ENCODE measurements at regions of chr2 and their contacts with region 1.

Region 1: DNA sequence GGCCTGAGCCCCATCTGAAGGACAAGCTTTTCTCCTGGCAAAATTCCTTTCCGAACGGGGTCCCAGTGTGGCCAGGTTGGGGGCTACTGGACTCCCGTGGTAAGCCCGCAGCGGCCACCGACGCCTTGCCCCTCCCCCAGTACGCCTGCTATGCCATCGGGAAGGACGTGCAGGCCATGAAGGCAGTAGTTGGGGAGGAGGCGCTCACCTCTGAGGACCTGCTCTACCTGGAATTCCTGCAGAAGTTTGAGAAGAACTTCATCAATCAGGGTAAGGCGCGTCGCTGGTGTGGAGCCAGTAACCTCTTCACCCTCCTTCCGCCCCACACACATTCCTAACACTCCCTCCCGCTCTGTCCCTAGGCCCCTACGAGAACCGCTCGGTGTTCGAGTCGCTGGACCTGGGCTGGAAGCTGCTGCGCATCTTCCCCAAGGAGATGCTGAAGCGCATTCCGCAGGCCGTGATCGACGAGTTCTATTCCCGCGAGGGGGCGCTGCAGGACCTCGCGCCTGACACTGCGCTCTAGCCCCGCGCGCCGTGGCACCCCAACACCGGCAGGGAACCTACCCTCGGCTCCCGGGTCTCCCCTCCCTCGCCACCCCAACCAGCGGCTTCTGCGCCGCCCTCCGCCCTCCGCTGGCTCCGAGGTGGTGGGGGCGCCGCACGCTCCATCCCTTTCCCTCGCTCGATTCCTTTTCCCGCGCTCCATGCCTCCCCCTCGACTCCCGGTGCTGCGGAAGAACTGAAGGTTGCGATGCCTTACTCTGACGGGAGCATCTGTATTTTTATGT is 13.6 kb upstream of the ANKRD53 start:
- DNase-seq: peak; percentile 83
- H3K4me3 Mint-ChIP-seq: peak overlapping the region; percentile 83
- H3K27ac Mint-ChIP-seq: no peak overlapping the region
- H3K4me1 Mint-ChIP-seq: peaks cover 7% of the 10 kb centered on the region
- H3K27me3 Mint-ChIP-seq: peaks cover 40% of the 10 kb centered on the region

Region 2: DNA sequence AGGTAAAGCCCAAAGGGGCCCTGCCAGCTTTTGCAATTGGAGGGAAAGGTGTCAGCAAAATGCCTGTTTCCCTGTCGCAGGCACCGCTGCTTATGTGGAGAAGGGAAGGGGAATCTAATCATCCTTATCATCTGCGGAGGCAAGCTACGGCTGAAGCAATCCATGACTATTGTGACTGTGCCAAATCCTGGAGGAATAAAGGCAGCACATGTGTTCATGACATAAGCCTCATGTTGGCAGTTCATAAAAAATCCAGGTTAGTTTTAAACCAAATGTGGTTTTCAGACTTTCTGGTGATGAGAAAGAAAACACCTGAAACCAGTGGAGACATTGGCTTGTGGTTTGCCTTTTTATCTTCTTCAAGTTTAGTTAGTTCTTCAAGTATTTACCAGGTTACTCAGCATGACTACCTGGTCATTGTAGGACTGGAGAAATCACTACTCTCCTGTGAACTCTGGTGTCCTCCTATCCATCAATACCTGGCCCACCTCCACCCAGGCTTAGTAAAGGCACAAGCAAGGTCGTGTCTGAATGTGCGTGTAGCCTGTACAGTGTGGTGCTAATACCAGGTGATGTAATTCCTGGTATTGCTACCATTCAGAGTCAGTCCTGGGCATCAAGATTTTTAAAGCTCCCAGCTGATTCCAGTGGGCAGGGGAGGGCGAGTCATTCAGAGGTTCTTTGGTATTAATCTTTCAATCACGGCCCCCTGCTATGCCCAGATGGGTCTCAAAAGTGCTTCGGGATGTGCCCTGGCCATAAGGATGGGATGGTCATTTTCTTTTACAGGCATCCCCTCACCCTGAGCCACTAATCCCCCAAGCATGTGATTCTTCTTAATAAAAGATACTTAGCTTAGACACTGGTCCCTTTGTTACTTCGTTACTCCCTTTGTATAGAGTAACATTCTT is 508.0 kb before region 1 on chr2:
- CTCF ChIA-PET with region 1: no interaction called
- POLR2A ChIA-PET with region 1: no interaction called
- DNase-seq: no peak
- H3K4me3 Mint-ChIP-seq: no peak overlapping the region
- H3K27ac Mint-ChIP-seq: no peak overlapping the region
- H3K4me1 Mint-ChIP-seq: peaks cover 24% of the 10 kb centered on the region
- H3K27me3 Mint-ChIP-seq: peaks cover 21% of the 10 kb centered on the region

Region 3: DNA sequence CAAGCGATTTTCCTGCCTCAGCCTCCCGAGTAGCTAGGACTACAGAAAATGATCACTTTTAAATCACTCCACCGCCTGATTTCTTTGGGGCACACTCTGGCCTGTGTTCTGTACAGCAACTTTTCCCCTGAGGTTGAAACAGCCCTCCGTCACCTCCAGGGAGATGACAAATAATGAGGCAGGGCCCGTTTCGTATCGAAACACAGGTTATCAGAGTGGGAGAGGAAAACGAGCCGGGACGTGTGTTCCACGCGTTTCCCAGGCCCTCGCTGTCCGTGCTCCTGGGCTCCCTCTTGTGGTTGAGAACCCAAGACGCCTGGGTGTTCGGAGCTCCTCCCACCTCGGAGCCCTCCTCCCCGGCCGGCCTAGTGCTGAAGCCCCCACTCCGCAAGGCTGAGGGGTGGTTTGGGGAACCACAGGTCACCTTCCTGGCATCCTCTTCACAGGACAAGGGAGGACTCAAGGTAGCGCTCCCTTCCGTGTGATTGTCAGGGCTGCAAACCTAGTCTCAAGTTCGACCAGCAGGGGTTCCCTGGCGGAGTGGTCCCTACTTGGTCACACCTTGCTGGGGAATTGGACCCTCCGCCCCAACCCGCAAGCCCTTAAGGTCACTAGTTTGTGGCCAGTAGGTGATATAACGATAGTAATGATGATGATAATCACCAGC is 16.3 kb before region 1 on chr2:
- CTCF ChIA-PET with region 1: interaction called, 14 read pairs
- POLR2A ChIA-PET with region 1: interaction called, 3 read pairs
- DNase-seq: peak; percentile 79
- H3K4me3 Mint-ChIP-seq: peak overlapping the region; percentile 53
- H3K27ac Mint-ChIP-seq: no peak overlapping the region
- H3K4me1 Mint-ChIP-seq: peaks cover 11% of the 10 kb centered on the region
- H3K27me3 Mint-ChIP-seq: peaks cover 24% of the 10 kb centered on the region

Region 4: GRCh38 chr2:70984576-70985282 is 19.9 kb after region 1 on chr2:
- CTCF ChIA-PET with region 1: interaction called, 15 read pairs
- POLR2A ChIA-PET with region 1: no interaction called
- DNase-seq: peak; percentile 85
- H3K4me3 Mint-ChIP-seq: peak overlapping the region; percentile 4
- H3K27ac Mint-ChIP-seq: peak overlapping the region; percentile 54
- H3K4me1 Mint-ChIP-seq: peaks cover 19% of the 10 kb centered on the region
- H3K27me3 Mint-ChIP-seq: no peaks in the 10 kb centered on the region

Region 5: GRCh38 chr2:71000780-71001591 is 36.2 kb after region 1 on chr2:
- CTCF ChIA-PET with region 1: interaction called, 11 read pairs
- POLR2A ChIA-PET with region 1: no interaction called
- DNase-seq: peak; percentile 84
- H3K4me3 Mint-ChIP-seq: peak overlapping the region; percentile 48
- H3K27ac Mint-ChIP-seq: peak overlapping the region; percentile 78
- H3K4me1 Mint-ChIP-seq: peaks cover 31% of the 10 kb centered on the region
- H3K27me3 Mint-ChIP-seq: no peaks in the 10 kb centered on the region